Ascending aorta (tissue), 2 donors: ENCODE measurements at regions of chr15 and their contacts with region 1.

Region 1: GRCh38 chr15:95470997-95471689 is 859.4 kb upstream of the NR2F2 start:
- DNase-seq: no peak
- H3K4me3 ChIP-seq: no peak overlapping the region
- H3K27ac ChIP-seq: peak overlapping the region; percentile 70 to 79
- H3K4me1 ChIP-seq: peaks cover 0 to 17% of the 10 kb centered on the region in 2 donors
- H3K27me3 ChIP-seq: no peaks in the 10 kb centered on the region
- CTCF ChIP-seq: no peak

Region 2: GRCh38 chr15:95432878-95433405 is 38.2 kb before region 1 on chr15:
- intact Hi-C with region 1: loop called (anchors 5 kb)
- DNase-seq: no peak
- H3K4me3 ChIP-seq: peak overlapping the region in 1 of 2 donors; percentile 4
- H3K27ac ChIP-seq: peak overlapping the region; percentile 82
- H3K4me1 ChIP-seq: peaks cover 7 to 14% of the 10 kb centered on the region in 2 donors
- H3K27me3 ChIP-seq: no peaks in the 10 kb centered on the region
- CTCF ChIP-seq: no peak

Region 3: DNA sequence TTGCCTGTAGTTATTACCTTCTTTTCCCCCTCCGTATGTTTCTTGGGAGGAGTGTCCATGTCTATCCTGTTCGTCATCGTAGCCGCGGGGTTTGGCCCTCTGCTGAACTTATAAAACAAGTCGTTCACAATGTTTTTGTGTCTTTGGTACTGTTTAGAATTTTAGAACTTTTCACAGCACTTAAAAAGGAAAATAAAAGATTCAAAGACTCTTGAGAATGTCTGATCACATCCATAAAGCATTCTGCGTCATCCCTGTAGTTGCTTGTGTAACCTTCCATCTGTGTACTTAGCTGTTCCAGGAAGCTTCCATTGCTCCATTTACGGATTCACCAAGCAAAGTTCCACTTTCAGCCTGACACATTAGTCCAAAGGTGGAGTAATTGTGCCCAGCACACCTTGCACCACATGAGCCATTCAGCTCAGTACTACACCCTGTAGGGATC is 182.2 kb after region 1 on chr15:
- intact Hi-C with region 1: no loop called
- DNase-seq: no peak
- H3K4me3 ChIP-seq: no peak overlapping the region
- H3K27ac ChIP-seq: no peak overlapping the region
- H3K4me1 ChIP-seq: no peaks in the 10 kb centered on the region
- H3K27me3 ChIP-seq: no peaks in the 10 kb centered on the region
- CTCF ChIP-seq: no peak